ENCODE measurements at regions of chr11 and their contacts with region 1.

Region 1: DNA sequence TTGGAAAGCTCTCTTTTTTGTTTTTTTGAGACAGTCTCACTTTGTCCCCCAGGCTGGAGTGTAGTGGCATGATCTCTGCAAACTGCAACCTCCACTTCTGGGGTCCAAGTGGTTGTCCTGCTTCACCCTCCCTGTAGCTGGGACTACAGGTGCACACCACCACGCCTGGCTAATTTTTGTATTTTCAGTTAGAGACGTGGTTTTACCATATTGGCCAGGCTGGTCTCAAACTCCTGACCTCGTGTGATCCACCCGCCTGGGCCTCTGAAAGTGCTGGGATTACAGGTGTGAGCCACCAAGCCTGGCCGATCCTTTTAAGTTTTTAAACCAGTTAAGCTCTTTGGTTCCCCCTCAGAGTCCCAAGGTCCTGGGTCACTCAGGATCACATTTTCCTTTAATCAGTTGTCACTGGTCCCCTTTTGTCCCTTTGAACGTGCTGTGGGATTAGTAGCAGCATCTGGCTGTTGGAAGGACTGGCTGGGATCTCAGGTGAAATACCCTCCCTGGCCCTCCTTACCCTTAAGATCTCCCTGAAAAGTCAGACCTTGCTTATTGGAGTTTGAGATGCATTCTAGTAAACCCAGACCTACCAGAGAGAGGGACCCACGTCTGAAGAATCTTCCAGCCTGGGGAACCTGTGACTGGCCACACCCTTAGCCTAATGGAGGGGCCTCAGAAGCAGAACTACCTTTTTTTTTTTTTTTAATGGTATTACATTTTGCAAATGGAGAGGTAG is 8.1 kb downstream of the MALAT1 start:
- DNase-seq: peak; percentile 61
- H3K4me3 ChIP-seq: peak overlapping the region in 2 of 3 experiments; percentile 91 to 98
- H3K27ac ChIP-seq: peak overlapping the region; percentile 89
- H3K4me1 ChIP-seq: peaks cover 24% of the 10 kb centered on the region
- H3K27me3 ChIP-seq: no peaks in the 10 kb centered on the region
- CTCF ChIP-seq: no peak
- POLR2A ChIP-seq: peak; percentile 87

Region 2: DNA sequence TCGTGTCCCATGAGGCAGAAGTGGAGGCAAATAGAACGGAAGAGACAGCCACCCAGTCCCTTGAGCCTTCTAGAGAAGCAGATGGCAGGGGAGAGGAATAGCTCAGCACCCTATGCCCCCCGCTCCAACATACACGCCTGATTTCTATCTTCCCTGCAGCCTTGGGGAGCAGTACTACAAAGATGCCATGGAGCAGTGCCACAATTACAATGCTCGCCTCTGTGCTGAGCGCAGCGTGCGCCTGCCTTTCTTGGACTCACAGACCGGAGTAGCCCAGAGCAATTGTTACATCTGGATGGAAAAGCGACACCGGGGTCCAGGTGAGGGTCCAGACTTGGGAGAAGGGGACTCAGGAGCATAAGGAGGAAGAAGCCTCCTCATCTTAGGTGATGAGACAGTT is 166.7 kb before region 1 on chr11:
- CTCF ChIA-PET with region 1: no interaction called
- POLR2A ChIA-PET with region 1: no interaction called
- dilution Hi-C with region 1: no loop called
- intact Hi-C with region 1: no loop called
- DNase-seq: no peak
- H3K4me3 ChIP-seq: no peak overlapping the region
- H3K27ac ChIP-seq: no peak overlapping the region
- H3K4me1 ChIP-seq: peaks cover 3% of the 10 kb centered on the region
- H3K27me3 ChIP-seq: no peaks in the 10 kb centered on the region
- CTCF ChIP-seq: no peak
- POLR2A ChIP-seq: no peak

Region 3: GRCh38 chr11:65366340-65366773 is 140.6 kb before region 1 on chr11:
- CTCF ChIA-PET with region 1: interaction called, 13 read pairs
- POLR2A ChIA-PET with region 1: interaction called, 4 read pairs
- dilution Hi-C with region 1: no loop called
- intact Hi-C with region 1: loop called (anchors 1 kb)
- DNase-seq: peak; percentile 78
- H3K4me3 ChIP-seq: no peak overlapping the region
- H3K27ac ChIP-seq: no peak overlapping the region
- H3K4me1 ChIP-seq: peaks cover 7% of the 10 kb centered on the region
- H3K27me3 ChIP-seq: no peaks in the 10 kb centered on the region
- CTCF ChIP-seq: peak; percentile 49 to 66
- POLR2A ChIP-seq: no peak

Region 4: GRCh38 chr11:65429724-65430405 is 77.1 kb before region 1 on chr11:
- CTCF ChIA-PET with region 1: interaction called, 5 read pairs
- POLR2A ChIA-PET with region 1: interaction called, 127 read pairs
- dilution Hi-C with region 1: no loop called
- intact Hi-C with region 1: loop called (anchors 1 kb)
- DNase-seq: peak; percentile 79
- H3K4me3 ChIP-seq: peak overlapping the region in 2 of 3 experiments; percentile 16 to 95
- H3K27ac ChIP-seq: peak overlapping the region; percentile 45
- H3K4me1 ChIP-seq: peaks cover 45% of the 10 kb centered on the region
- H3K27me3 ChIP-seq: no peaks in the 10 kb centered on the region
- CTCF ChIP-seq: no peak
- POLR2A ChIP-seq: no peak

Region 5: DNA sequence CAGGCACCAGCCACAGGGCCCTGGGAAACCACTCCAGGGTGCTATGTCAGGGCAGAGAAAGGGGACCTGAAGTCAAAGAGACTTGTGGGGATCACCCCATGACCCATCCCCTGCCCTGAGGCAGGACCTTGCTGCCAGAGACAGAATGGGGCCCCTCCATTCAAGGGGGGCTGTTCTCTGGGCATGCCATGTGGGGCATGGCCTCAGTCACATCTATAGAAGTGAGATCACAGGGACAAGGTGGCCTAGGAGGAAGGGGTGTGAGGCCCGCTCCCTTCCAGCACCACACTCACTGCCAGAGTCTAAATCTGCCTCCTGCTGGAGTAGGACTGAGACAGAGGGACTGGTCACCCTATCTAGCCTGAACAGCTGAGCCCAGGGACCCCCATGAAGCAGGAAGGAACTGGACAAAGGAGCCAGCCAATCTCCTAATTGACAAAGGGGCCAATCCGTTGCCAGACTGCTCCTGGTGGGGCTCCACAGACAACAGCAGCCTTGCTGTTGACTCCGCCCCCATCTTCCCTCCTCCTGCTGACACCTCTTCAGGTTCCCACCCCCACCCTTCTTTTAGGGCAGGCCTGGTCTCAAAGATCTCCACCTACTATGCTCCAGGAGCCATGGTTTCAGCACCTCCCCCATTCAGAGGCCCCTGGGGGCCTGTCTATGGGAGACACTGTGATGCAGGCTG is 58.4 kb before region 1 on chr11:
- CTCF ChIA-PET with region 1: interaction called, 15 read pairs
- POLR2A ChIA-PET with region 1: interaction called, 40 read pairs
- dilution Hi-C with region 1: no loop called
- intact Hi-C with region 1: no loop called
- DNase-seq: peak; percentile 37
- H3K4me3 ChIP-seq: no peak overlapping the region
- H3K27ac ChIP-seq: no peak overlapping the region
- H3K4me1 ChIP-seq: no peaks in the 10 kb centered on the region
- H3K27me3 ChIP-seq: no peaks in the 10 kb centered on the region
- CTCF ChIP-seq: no peak
- POLR2A ChIP-seq: peak; percentile 56

Region 6: DNA sequence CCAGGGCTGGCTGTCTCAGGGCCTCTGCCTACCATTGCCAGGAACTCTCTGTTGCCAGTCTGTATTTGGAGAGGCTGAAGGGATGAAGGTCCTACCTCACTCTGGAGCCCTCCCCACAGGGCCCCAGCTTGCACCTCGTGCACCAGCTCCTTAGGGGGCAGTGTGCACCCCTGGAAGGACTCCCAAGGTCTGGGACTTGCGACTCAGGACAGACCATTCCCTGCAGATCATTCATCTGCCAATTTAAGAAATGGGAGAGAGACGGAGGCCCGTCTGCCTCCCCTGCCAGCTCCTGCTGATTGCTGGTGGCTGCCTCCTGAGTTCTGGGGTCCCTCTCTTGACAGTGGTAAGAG is 35.6 kb before region 1 on chr11:
- CTCF ChIA-PET with region 1: interaction called, 95 read pairs
- POLR2A ChIA-PET with region 1: interaction called, 283 read pairs
- dilution Hi-C with region 1: no loop called
- intact Hi-C with region 1: loop called (anchors 1 kb)
- DNase-seq: peak; percentile 83
- H3K4me3 ChIP-seq: no peak overlapping the region
- H3K27ac ChIP-seq: peak overlapping the region; percentile 89
- H3K4me1 ChIP-seq: peaks cover 19% of the 10 kb centered on the region
- H3K27me3 ChIP-seq: no peaks in the 10 kb centered on the region
- CTCF ChIP-seq: peak; percentile 70 to 78
- POLR2A ChIP-seq: no peak

Measured in endothelial cell of umbilical vein (primary cell).